ENCODE measurements at regions of chr1 and their contacts with region 1.

Region 1: DNA sequence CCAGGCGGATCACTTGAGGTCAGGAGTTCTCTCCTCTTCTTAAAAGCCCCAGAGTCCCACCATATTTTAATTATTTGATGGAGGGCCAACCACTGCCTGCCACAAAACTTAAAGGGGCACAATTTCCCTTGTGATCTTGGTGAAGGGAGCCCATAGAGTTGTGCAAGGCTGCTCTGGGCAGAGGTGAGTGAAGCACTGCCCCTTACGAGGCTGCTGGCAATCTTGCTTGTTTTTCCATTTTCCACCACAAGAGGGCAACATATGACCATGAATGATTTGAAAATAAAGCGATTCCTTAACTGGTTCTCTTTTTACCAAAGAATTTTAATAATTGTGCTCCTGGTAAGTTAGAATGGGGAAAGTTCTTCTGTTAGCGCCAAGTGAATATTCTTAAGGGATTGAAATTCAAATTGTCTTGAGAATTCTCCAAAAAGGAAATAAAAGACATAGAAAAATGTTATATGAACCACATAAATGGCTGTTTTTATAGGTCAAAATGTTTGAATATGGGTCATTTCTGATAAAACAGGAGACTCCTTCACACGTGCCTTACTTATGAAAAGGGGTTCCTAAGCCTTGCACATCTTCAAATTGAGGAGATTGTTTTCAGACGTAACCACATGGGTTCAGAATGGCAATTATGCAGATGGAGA is 22.7 kb downstream of the PGM1 start:
- DNase-seq: peak; percentile 61 to 63
- H3K4me3 ChIP-seq: no peak overlapping the region
- H3K27ac ChIP-seq: no peak overlapping the region
- H3K4me1 ChIP-seq: peaks cover 38% of the 10 kb centered on the region
- H3K27me3 ChIP-seq: no peaks in the 10 kb centered on the region
- CTCF ChIP-seq: peak; percentile 91

Region 2: DNA sequence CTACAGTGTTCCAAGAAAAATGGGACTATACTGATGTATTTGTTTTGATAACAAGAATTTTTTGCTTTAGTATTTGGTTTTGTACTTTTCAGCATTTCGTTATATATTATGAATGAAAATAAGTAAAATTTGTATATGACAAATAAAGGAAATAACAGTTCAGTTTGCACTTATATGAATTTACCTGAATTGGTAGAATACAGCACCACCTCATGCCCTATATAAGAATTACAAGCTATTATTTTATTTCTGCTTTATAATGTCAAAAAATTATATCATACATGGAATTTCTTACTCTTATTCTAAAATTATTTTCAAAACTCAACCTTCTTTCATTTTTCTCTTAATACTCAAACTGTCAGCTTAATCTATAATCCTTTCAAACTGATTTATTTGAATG is 78.0 kb before region 1 on chr1:
- CTCF ChIA-PET with region 1: no interaction called
- POLR2A ChIA-PET with region 1: no interaction called
- intact Hi-C with region 1: no loop called
- DNase-seq: no peak
- H3K4me3 ChIP-seq: no peak overlapping the region
- H3K27ac ChIP-seq: no peak overlapping the region
- H3K4me1 ChIP-seq: no peaks in the 10 kb centered on the region
- H3K27me3 ChIP-seq: no peaks in the 10 kb centered on the region
- CTCF ChIP-seq: peak; percentile 77

Region 3: DNA sequence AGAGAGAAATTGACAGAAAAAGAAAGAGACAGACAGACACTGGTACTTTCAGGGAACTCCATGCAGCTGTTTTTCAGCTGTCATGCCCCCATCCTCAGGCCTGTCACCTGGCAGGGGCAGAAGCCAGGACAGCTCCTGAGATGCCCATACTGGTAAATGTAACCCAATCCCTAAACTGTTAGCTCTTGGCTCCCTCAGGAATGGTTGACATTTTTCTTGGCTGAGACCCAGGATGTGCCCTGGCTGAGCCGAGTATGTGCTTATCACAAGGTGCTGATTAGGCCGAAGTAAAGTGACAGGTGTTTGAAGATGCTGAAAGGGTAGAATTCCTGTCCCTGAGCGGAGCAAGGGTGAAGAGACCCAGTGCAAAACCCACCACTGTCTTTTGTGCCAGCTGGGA is 28.0 kb after region 1 on chr1:
- CTCF ChIA-PET with region 1: no interaction called
- POLR2A ChIA-PET with region 1: no interaction called
- intact Hi-C with region 1: no loop called
- DNase-seq: no peak
- H3K4me3 ChIP-seq: no peak overlapping the region
- H3K27ac ChIP-seq: no peak overlapping the region
- H3K4me1 ChIP-seq: no peaks in the 10 kb centered on the region
- H3K27me3 ChIP-seq: no peaks in the 10 kb centered on the region
- CTCF ChIP-seq: no peak

Region 4: DNA sequence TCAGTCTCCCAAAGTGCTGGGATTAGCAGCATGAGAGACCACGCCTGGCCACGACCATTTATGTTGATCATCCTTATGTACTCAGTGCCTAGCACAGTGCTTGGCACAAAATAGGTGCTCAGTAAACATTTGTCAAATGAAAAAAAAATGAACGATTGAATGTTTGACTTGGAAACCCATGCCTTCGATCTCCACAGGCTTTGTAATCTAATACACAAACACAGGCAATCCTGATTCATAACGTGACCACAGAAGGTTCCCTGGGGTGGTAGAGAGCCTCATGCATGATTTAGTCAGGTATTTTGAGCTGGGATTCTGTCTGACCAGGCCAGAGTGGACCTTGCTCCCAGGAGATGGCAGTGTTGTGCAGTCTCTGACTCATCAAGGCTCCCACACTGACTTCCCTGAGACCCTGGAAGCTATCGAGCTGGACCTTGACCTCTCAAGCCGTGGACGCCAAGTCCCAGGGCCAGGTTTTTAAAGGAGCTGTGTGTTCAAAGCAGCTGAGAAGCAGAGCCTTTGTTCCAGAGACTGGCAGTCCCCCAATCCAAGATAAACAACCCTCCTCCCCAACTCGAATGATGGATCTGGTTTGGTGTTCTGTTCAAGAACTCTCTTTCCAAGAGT is 58.5 kb after region 1 on chr1:
- CTCF ChIA-PET with region 1: interaction called, 7 read pairs
- POLR2A ChIA-PET with region 1: no interaction called
- intact Hi-C with region 1: loop called (anchors 1 kb)
- DNase-seq: peak; percentile 83 to 95
- H3K4me3 ChIP-seq: no peak overlapping the region
- H3K27ac ChIP-seq: peak overlapping the region; percentile 41; the same call in 1 of the 2 replicates
- H3K4me1 ChIP-seq: peaks cover 13% of the 10 kb centered on the region
- H3K27me3 ChIP-seq: no peaks in the 10 kb centered on the region
- CTCF ChIP-seq: peak; percentile 82

Measured in PC-9 (cell line).